ENCODE measurements at regions of chr19 and their contacts with region 1.

Region 1: DNA sequence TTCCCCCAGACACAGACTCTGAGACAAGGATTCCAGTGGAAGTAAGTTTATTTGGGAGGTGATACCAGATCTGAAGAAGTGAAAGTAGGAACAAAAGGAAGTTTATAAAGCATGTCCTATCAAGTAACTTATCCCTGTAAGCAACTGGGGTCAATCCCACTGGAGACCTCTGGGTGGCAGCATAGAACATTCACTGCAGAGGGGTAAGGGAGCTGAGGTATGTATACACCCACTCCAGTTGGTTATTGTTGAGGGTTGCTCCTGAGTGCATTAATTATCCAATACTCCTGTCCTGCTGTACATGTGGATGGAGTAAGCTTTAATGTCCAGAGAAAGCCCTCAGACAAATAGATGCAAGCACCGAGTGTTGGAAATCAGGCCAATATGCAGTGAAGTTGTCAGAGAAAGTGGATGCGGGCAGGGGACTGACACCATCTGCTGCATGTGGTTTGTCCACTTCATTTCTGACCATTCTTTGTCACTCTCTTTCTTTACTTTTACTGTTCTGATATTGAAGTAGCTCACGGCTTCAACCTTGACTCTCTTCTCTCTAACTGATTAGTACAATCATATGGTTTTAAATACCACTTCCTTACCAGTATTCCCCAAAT is 46.7 kb downstream of the NOTCH3 start:
- DNase-seq: peak; percentile 82
- ATAC-seq: peak; percentile 75
- H3K4me3 Mint-ChIP-seq: no peak overlapping the region
- H3K27ac Mint-ChIP-seq: no peak overlapping the region
- H3K4me1 Mint-ChIP-seq: no peaks in the 10 kb centered on the region; the same call in 1 of the 2 replicates
- H3K27me3 Mint-ChIP-seq: peaks cover 3% of the 10 kb centered on the region; the same call in 1 of the 2 replicates
- CTCF ChIP-seq: peak; percentile 55

Region 2: DNA sequence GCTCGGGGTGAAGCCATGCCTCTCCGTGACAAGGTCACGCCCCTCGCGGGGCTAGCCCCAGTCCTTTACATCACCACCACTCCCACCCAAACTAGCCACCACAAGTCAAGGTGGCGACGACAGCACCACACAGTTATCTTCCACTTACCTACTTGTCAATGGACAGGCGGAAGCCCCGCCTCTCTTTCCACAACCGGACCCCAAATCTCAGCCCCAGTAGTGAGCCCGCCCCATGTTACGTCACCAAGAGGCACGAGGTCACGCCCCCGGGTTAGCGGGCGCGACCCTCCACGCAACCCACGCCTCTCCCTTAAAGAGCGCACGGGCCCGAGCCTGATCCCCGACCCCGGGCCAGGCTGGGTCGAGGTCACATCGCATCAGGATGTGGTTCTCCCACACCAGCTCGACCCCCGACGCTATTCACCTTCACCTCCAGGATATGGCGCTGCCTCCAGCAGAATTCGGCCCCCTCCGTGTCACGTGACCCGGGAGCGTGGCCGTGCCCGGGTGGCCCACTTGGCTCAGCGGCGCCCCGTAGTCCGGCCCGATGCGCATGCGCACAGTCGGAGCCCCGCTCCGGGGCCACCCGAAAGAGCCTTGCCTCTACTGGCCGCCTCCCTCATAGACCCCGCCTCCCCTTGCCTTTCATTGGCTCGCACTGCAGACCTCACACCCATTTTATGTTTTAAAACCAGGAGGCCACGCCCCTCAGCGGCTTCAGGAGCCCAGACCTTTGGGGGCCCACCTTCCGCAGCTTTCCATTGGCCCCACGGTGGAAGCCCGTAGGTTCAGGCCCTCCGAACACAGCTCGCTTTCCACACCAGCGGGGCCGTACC is 28.7 kb before region 1 on chr19:
- CTCF ChIA-PET with region 1: interaction called, 15 read pairs
- POLR2A ChIA-PET with region 1: no interaction called
- DNase-seq: peak; percentile 98
- ATAC-seq: peak; percentile 95
- H3K4me3 Mint-ChIP-seq: peak overlapping the region; percentile 99
- H3K27ac Mint-ChIP-seq: peak overlapping the region; percentile 100
- H3K4me1 Mint-ChIP-seq: peaks cover 5% of the 10 kb centered on the region; the same call in 1 of the 2 replicates
- H3K27me3 Mint-ChIP-seq: no peaks in the 10 kb centered on the region; the same call in 1 of the 2 replicates
- CTCF ChIP-seq: no peak

Region 3: GRCh38 chr19:15177269-15178116 is 23.4 kb after region 1 on chr19:
- CTCF ChIA-PET with region 1: interaction called, 10 read pairs
- POLR2A ChIA-PET with region 1: no interaction called
- DNase-seq: peak; percentile 92
- ATAC-seq: peak; percentile 68
- H3K4me3 Mint-ChIP-seq: peak overlapping the region; percentile 44
- H3K27ac Mint-ChIP-seq: peak overlapping the region; percentile 10
- H3K4me1 Mint-ChIP-seq: peaks cover 13% of the 10 kb centered on the region
- H3K27me3 Mint-ChIP-seq: no peaks in the 10 kb centered on the region
- CTCF ChIP-seq: peak; percentile 93

Region 4: GRCh38 chr19:15379083-15379995 is 225.2 kb after region 1 on chr19 and contains the start of gene AKAP8:
- CTCF ChIA-PET with region 1: interaction called, 13 read pairs
- POLR2A ChIA-PET with region 1: no interaction called
- DNase-seq: peak; percentile 98
- ATAC-seq: peak; percentile 89
- H3K4me3 Mint-ChIP-seq: peak within 1 kb of the TSS; percentile 99
- H3K27ac Mint-ChIP-seq: peak within 1 kb of the TSS; percentile 98
- H3K4me1 Mint-ChIP-seq: peaks cover 29% of the 10 kb centered on the region
- H3K27me3 Mint-ChIP-seq: no peaks in the 10 kb centered on the region
- CTCF ChIP-seq: no peak
- total RNA-seq, gene AKAP8: 49.1 to 65.9 TPM (median 51.3 TPM) in 3 replicates